Mammary epithelial cell (primary cell): ENCODE measurements at regions of chr3 and their contacts with region 1.

Region 1: GRCh38 chr3:127768346-127769008 is 53.8 kb downstream of the MGLL start:
- DNase-seq: peak; percentile 93
- H3K4me3 ChIP-seq: no peak overlapping the region
- H3K27ac ChIP-seq: peak overlapping the region; percentile 46
- H3K4me1 ChIP-seq: peaks cover 22% of the 10 kb centered on the region
- H3K27me3 ChIP-seq: no peaks in the 10 kb centered on the region
- CTCF ChIP-seq: no peak

Region 2: GRCh38 chr3:127710155-127710941 is 58.1 kb before region 1 on chr3:
- CTCF ChIA-PET with region 1: no interaction called
- dilution Hi-C with region 1: loop called (anchors 5 kb)
- in situ Hi-C with region 1: no loop called
- intact Hi-C with region 1: no loop called
- DNase-seq: peak; percentile 10
- H3K4me3 ChIP-seq: no peak overlapping the region
- H3K27ac ChIP-seq: no peak overlapping the region
- H3K4me1 ChIP-seq: peaks cover 6% of the 10 kb centered on the region
- H3K27me3 ChIP-seq: no peaks in the 10 kb centered on the region
- CTCF ChIP-seq: no peak

Region 3: DNA sequence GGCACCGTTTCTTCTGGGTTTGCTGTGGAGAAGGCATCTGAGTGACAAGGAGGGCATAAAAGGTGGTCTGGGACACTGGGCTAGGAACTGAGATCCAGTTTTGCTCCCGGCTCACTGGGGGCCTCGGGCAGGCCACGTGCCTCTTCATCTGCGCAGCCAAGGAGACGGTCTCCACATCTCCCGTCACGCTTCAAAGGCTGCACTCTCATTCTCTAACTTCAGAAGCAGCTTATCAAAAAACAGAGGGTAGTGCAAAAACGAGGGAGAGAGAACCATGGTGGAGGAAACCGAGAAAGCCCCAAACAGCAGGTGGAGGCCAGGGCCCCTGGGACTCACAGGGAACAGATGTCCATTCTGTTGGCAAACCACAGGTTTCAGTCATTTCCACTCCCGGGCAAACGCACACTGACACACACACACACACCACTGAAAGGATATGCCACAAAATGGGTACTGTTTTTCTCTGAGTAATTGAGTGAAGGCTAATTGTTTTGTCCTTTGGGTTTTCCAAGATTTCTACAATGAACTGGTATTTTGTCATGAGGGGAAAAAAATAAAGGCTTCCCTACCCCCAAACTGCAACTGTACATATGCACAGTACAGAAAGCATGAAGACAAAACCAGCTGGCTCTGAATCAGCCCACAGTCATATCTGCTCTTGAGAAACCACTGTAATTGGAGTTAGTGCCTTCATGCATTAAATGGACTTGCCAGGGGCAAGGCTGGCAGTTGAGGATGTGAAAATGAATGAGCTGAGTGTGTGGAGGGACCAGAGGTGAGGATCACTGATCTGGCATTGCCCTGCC is 18.0 kb before region 1 on chr3:
- CTCF ChIA-PET with region 1: no interaction called
- dilution Hi-C with region 1: no loop called
- in situ Hi-C with region 1: no loop called
- intact Hi-C with region 1: loop called (anchors 1 kb)
- DNase-seq: peak; percentile 98
- H3K4me3 ChIP-seq: no peak overlapping the region
- H3K27ac ChIP-seq: peak overlapping the region; percentile 70
- H3K4me1 ChIP-seq: peaks cover 47% of the 10 kb centered on the region
- H3K27me3 ChIP-seq: no peaks in the 10 kb centered on the region
- CTCF ChIP-seq: no peak

Region 4: DNA sequence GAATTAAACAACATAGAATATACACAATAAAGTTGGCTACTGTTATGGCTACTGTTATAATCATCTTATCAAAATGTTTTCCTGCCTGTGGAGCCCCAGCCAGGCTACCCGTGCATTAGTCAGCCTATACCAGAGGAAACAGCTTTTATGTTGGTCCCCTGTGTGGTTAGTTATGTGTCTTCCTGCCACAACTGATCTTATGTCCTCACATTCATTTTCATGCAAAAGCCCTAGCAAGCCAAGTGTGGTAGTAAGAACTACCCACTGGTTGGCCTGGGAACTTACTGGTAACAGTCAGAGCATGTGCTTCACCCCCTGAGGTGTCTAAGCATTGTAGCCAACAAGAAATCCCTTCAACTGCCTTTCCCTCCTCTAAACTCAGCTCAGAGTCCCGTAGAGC is 32.0 kb after region 1 on chr3:
- CTCF ChIA-PET with region 1: no interaction called
- dilution Hi-C with region 1: no loop called
- in situ Hi-C with region 1: no loop called
- intact Hi-C with region 1: loop called (anchors 1 kb)
- DNase-seq: peak; percentile 38
- H3K4me3 ChIP-seq: no peak overlapping the region
- H3K27ac ChIP-seq: peak overlapping the region; percentile 93
- H3K4me1 ChIP-seq: peaks cover 38% of the 10 kb centered on the region
- H3K27me3 ChIP-seq: no peaks in the 10 kb centered on the region
- CTCF ChIP-seq: no peak

Region 5: DNA sequence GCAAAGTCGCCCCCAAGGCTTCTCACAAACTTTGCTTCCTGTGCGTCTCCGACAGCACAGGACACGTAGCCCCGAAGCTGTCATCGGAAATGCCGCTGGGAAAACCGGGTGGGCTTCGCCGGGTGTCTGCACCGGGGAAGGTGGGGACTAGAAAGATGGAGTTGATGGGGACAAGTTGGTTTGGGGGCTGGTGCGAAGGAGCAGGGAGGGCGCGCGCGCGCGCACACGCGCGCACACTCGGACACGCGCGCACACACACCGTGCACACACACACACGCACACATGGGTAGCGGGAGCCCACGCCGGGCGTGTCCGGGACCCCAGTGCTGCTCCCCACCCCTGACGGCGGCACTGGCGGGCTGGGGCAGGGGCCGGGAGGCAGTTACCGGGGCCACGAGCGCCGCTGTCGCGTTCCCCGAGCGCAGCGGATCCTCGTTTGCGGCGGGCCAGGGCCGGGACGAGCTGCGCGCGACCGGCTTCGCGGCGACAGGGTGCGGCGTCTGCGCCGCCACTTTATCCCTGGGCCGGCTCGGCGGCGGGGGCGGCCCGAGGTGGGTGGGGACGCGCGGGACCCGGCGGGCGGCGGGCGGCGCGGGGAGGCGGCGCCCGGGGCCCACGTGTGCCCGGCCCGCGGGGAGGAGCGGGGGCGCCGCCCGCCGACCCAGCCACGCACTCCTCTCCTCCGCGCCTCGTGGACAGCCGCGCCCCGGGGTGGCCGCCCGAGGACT is 54.4 kb after region 1 on chr3:
- CTCF ChIA-PET with region 1: no interaction called
- dilution Hi-C with region 1: no loop called
- in situ Hi-C with region 1: no loop called
- intact Hi-C with region 1: loop called (anchors 2 kb)
- DNase-seq: peak; percentile 32
- H3K4me3 ChIP-seq: peak overlapping the region; percentile 73 to 91 (median 77)
- H3K27ac ChIP-seq: peak overlapping the region; percentile 32
- H3K4me1 ChIP-seq: peaks cover 38% of the 10 kb centered on the region
- H3K27me3 ChIP-seq: no peaks in the 10 kb centered on the region
- CTCF ChIP-seq: no peak

Region 6: DNA sequence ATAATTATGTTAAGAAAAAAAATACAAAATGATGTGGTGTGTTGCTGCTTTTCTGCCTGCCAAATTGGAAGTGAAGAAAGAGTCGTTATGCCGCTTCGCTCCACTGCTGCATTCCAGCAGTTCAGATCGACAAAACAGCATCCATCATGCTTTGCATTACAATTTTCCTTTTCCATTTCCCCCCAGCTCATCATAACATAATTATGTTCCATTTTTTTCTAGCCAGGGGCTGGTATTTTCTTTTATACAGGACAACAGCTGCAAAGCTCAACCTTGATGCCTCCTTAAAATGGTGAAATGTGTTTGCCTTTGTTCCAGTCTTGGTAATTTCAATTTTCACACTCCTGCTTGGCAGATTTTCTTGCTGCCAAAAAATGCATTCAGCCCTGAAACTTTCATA is 101.7 kb after region 1 on chr3:
- CTCF ChIA-PET with region 1: no interaction called
- dilution Hi-C with region 1: no loop called
- in situ Hi-C with region 1: no loop called
- intact Hi-C with region 1: no loop called
- DNase-seq: no peak
- H3K4me3 ChIP-seq: no peak overlapping the region
- H3K27ac ChIP-seq: no peak overlapping the region
- H3K4me1 ChIP-seq: no peaks in the 10 kb centered on the region
- H3K27me3 ChIP-seq: no peaks in the 10 kb centered on the region
- CTCF ChIP-seq: no peak